ENCODE measurements at regions of chr17 and their contacts with region 1.

Region 1: DNA sequence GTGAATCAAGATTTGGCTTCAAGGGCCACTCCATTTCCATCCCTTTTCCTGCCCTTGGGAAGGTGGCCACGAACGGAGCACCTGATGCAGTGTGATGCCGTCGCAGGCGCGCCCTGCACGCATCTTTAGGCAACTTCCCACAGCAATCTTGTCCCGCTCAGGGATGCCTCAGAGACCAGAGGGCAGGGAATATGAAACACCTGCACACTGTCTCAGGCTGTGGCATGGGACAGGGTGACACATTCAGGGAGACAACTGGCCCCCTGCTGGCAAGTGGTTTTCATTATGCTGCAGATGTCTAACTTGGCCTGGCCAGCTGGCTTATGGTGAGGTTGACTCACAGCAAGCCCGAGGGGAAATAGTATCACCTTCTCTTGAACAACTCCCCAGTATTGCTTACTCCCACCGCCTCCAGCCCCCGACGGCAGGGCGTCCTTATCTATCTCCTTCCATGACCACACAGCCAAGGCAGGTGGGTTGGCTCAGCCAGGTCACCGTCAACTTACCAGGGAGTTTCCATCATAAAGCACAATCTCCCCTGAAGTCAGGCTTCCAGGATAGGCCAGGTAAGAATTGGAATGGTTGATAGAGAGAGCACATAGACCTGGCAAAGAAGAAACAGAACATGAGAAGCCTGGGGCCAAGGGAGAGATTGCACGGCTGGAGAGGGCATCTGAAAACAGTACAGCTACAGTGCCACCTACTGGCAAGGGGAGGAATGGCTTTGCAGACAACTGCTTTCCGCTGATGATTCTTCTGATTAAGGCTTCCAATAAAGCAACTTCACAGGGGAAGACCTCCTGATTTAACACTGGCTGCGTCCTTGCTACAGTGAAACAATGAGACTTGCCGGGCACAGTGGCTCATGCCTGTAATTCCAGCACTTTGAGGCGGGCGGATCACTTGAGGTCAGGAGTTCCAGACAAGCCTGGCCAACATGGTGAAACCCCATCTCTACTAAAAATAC is 21.1 kb downstream of the WIPI1 start:
- DNase-seq: peak; percentile 92
- ATAC-seq: peak; percentile 72
- H3K4me3 Mint-ChIP-seq: peak overlapping the region; percentile 22
- H3K27ac Mint-ChIP-seq: peak overlapping the region; percentile 91
- H3K4me1 Mint-ChIP-seq: peaks cover 56% of the 10 kb centered on the region
- H3K27me3 Mint-ChIP-seq: no peaks in the 10 kb centered on the region

Region 2: DNA sequence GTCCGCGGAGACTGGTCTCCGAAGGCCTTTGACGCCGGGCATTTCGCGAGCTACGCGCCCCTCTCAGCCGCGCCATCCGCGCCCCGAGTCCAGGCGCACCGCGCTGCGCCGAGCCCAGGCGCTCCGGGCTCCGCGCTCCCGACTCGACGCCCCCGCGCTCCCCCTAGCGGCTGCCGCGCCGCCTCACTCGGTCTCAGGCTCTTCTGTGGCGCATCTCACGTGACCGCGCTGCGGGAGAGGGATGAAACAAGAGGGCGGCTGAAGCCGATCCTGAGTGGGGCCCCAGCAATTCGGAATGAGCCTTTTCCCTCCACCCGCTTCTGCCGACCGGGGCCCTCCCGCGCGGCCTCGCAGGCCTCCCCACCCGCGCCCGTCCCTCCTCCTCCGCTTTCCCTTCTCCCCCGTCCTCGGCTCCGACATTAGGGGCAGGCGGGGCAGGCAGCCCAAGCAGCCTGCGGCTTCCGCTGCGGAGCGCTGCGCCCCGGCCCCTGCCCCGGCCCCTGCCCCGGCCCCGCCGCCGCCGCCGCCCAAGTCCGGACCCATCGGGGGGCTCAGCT is 230.8 kb before region 1 on chr17:
- CTCF ChIA-PET with region 1: interaction called, 15 read pairs
- POLR2A ChIA-PET with region 1: no interaction called
- DNase-seq: peak; percentile 95
- ATAC-seq: peak; percentile 87
- H3K4me3 Mint-ChIP-seq: peak overlapping the region; percentile 85
- H3K27ac Mint-ChIP-seq: peak overlapping the region; percentile 89
- H3K4me1 Mint-ChIP-seq: peaks cover 42% of the 10 kb centered on the region
- H3K27me3 Mint-ChIP-seq: peaks cover 4% of the 10 kb centered on the region

Region 3: GRCh38 chr17:68260051-68260762 is 176.0 kb before region 1 on chr17:
- CTCF ChIA-PET with region 1: interaction called, 172 read pairs
- POLR2A ChIA-PET with region 1: interaction called, 3 read pairs
- DNase-seq: no peak
- ATAC-seq: no peak
- H3K4me3 Mint-ChIP-seq: peak overlapping the region; percentile 8
- H3K27ac Mint-ChIP-seq: peak overlapping the region; percentile 89
- H3K4me1 Mint-ChIP-seq: peaks cover 75% of the 10 kb centered on the region
- H3K27me3 Mint-ChIP-seq: no peaks in the 10 kb centered on the region

Region 4: DNA sequence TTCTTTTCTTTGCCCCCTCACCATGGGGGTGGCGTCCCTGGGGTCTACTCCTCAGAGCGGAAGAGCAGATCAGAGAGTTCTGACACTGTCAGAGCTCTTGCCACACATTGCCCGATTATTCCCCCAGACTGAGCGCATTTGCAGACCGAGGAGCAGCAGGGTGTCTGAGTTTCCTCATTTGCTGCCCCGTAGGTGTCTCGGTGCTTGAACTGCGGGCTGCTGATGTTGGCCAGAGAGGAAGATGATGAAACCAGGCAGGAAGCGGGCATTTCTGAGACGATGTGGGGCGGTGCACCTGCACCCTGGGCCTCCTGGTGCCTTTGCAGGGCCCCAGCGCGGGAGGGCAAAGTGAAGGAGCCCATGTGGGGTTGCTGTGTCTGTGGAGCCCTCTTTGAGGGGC is 89.7 kb before region 1 on chr17:
- CTCF ChIA-PET with region 1: interaction called, 15 read pairs
- POLR2A ChIA-PET with region 1: no interaction called
- DNase-seq: peak; percentile 88
- ATAC-seq: peak; percentile 81
- H3K4me3 Mint-ChIP-seq: peak overlapping the region; percentile 77
- H3K27ac Mint-ChIP-seq: peak overlapping the region; percentile 100
- H3K4me1 Mint-ChIP-seq: peaks cover 77% of the 10 kb centered on the region
- H3K27me3 Mint-ChIP-seq: no peaks in the 10 kb centered on the region

Region 5: DNA sequence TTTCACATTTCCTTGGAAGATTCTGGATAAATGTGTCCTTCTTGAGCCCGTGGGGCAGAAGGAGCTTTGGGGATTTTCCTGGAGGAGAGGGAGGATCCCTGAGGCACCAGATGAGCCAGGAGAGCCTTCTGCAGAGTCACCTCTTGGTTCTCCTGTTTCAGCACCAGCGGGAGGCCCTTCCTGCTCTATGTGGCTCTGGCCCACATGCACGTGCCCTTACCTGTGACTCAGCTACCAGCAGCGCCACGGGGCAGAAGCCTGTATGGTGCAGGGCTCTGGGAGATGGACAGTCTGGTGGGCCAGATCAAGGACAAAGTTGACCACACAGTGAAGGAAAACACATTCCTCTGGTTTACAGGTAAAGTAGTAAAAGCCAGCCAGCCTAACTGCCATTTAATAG is 67.8 kb before region 1 on chr17:
- CTCF ChIA-PET with region 1: no interaction called
- POLR2A ChIA-PET with region 1: no interaction called
- DNase-seq: no peak
- ATAC-seq: no peak
- H3K4me3 Mint-ChIP-seq: no peak overlapping the region
- H3K27ac Mint-ChIP-seq: no peak overlapping the region
- H3K4me1 Mint-ChIP-seq: peaks cover 4% of the 10 kb centered on the region
- H3K27me3 Mint-ChIP-seq: no peaks in the 10 kb centered on the region

Region 6: DNA sequence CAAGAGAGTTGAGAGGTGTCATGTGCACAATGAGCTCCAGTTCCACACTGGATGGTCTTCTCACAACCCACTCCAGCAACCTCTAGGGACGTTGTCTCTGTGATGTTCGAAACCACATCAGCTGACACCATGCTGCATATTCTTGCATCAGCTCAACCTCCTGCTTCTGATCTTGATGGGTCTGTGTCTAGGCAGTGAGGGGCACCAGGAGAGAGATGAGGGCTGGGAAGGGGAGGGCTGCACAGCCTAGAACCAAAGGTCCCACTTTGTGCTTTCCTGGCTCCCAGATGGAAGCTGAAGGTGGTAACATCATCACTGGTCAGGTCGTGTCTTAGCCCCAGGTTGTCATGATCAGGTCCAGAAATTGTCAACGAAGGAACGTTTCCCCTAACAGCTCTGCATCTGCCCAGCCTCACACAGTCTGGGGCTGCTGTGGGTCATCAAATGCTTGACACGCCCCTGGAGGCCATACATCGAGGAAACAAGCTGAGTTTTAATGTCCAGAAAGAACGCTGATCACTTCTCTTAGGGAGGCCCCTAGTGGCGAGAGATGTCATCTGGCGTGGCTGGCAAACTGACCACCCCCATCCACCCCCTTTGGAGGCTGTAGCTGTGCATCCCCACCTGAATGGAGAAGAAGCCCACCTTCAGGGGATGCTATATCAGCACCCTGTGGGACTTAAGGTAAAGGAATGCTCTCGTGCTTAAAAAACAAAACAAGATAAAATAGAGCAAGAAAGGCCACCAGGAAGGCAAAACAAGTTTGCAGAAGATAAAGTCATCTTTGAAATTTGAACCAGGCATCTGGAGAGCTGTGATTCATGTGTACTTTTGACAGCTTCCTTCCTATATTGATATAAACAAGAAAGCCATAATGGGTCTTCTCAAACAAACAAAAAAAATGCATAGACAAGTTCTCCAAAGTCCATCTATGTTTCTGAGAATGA is 37.2 kb before region 1 on chr17:
- CTCF ChIA-PET with region 1: interaction called, 37 read pairs
- POLR2A ChIA-PET with region 1: no interaction called
- DNase-seq: peak; percentile 64
- ATAC-seq: peak; percentile 65
- H3K4me3 Mint-ChIP-seq: peak overlapping the region; percentile 43
- H3K27ac Mint-ChIP-seq: peak overlapping the region; percentile 96
- H3K4me1 Mint-ChIP-seq: peaks cover 39% of the 10 kb centered on the region
- H3K27me3 Mint-ChIP-seq: no peaks in the 10 kb centered on the region

Region 7: GRCh38 chr17:68446626-68447041 is 10.5 kb after region 1 on chr17:
- CTCF ChIA-PET with region 1: interaction called, 15 read pairs
- POLR2A ChIA-PET with region 1: no interaction called
- DNase-seq: no peak
- ATAC-seq: no peak
- H3K4me3 Mint-ChIP-seq: no peak overlapping the region
- H3K27ac Mint-ChIP-seq: peak overlapping the region; percentile 77
- H3K4me1 Mint-ChIP-seq: peaks cover 18% of the 10 kb centered on the region
- H3K27me3 Mint-ChIP-seq: no peaks in the 10 kb centered on the region